Activated CD4-positive, alpha-beta T cell treated with anti-CD3 and anti-CD28 coated beads, Interleukin-2, amount 10 ng/mL, durations not matched to agents 7 days and 5 days (primary cell): ENCODE measurements at regions of chr3 and their contacts with region 1.

Region 1: GRCh38 chr3:50298836-50299637 is at the starts of genes HYAL3 and NAA80:
- DNase-seq: peak; percentile 99
- H3K4me3 Mint-ChIP-seq: peak within 1 kb of the TSS; percentile 95
- H3K27ac Mint-ChIP-seq: peak within 1 kb of the TSS; percentile 100
- H3K4me1 Mint-ChIP-seq: peaks cover 30% of the 10 kb centered on the region
- H3K27me3 Mint-ChIP-seq: no peaks in the 10 kb centered on the region
- total RNA-seq, gene HYAL3: 9.2 to 10.9 TPM
- total RNA-seq, gene NAA80: 28.9 to 31.7 TPM

Region 2: GRCh38 chr3:50121416-50122032 is 177.5 kb before region 1 on chr3:
- CTCF ChIA-PET with region 1: no interaction called
- POLR2A ChIA-PET with region 1: no interaction called
- DNase-seq: peak; percentile 73
- H3K4me3 Mint-ChIP-seq: no peak overlapping the region
- H3K27ac Mint-ChIP-seq: no peak overlapping the region
- H3K4me1 Mint-ChIP-seq: no peaks in the 10 kb centered on the region
- H3K27me3 Mint-ChIP-seq: no peaks in the 10 kb centered on the region

Region 3: DNA sequence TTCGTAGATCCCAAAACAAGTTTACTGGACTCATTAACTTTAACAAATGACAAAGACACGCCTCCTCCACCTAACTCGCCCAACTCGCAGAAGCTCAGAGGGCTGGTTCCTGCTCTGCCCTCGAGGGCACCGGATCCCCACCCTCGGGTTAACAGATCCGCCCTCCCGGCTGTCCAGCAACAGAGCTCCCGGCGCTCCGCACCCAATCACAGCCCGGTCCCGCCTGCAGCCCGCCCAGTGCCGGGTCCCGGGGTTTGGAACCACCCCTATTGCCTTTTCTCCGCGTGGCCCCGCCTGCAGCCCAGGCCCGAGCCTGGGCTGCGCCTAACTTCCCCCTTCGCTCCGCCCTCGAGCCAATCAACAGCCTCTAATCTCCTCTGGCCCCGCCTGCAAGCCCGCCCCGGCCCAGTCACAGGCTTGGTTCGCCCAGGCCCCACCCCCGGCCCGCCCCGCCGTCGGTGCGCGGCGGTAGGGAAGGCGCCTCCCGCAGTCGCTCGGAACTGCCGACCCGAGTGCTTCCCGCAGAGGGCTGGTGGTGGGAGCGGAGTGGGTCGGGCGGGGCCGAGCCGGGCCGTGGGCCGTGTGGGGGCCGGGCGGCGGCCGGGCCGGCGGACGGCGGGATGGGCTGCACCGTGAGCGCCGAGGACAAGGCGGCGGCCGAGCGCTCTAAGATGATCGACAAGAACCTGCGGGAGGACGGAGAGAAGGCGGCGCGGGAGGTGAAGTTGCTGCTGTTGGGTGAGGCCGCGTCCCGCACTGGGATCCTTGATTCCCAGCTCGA is 63.1 kb before region 1 on chr3 and contains the start of gene GNAI2:
- CTCF ChIA-PET with region 1: interaction called, 10 read pairs
- POLR2A ChIA-PET with region 1: interaction called, 3 read pairs
- DNase-seq: peak; percentile 99
- H3K4me3 Mint-ChIP-seq: peak within 1 kb of the TSS; percentile 93
- H3K27ac Mint-ChIP-seq: peak within 1 kb of the TSS; percentile 97
- H3K4me1 Mint-ChIP-seq: peaks cover 42% of the 10 kb centered on the region
- H3K27me3 Mint-ChIP-seq: no peaks in the 10 kb centered on the region
- total RNA-seq, gene GNAI2: 489 to 524 TPM

Region 4: DNA sequence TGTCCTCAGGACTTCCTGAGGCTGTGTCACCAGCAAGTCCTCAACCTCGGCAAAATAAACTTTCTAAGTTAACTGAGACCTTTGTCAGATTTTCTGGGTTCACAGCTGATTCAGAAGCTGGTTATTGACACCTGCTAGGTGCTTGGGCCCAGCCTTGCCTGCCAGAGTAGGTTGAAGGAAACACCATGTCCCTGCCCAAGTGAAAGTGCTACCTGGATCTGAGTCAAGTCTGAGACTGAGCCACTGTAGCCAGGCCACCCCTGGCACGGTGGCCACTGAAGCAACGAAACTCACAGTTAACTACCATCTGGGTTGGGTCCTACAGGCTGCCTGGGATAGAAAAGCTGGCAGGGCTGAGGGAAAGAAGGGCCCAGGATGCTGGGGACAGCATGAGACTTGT is 15.3 kb after region 1 on chr3:
- CTCF ChIA-PET with region 1: interaction called, 12 read pairs
- POLR2A ChIA-PET with region 1: no interaction called
- DNase-seq: no peak
- H3K4me3 Mint-ChIP-seq: no peak overlapping the region
- H3K27ac Mint-ChIP-seq: no peak overlapping the region
- H3K4me1 Mint-ChIP-seq: peaks cover 28% of the 10 kb centered on the region
- H3K27me3 Mint-ChIP-seq: no peaks in the 10 kb centered on the region

Region 5: DNA sequence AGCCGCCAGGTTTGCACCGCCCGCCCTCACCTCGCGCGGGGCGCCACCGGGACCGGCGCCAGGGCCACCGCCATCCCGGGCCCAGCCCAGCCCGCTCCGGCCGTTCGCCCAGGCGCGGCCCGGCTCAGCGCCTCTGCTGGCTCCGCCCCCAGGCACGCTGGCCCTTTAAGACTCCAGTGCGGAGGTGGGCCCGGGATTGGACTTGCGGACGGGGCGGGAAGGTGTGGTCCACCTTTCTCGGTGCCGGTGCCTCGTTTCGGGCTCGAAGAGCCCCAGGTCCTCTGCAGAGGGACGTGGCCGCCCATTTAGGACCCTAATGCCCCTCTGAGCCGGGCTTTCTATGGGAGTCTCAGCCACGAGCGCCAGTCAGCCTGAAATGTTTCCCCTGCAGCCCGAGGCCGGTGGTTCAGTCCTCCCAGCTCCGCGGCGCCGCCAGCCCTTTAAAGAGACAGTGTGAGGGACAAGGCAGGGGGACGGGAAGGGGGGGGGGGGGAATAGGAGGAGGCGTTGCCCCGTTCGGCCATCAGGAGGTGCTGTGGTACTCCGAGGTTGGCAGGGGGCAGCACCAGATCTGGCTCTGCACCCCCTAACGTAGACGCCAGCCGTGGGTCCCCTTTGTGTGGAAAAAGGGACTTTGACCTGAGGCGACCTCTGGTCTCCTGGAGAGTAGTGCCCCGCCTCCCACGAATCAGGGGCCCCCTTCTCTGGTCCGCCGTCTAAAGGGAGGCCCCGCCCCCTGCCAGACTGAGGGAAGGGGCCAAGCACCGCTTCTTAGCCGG is 22.5 kb after region 1 on chr3:
- CTCF ChIA-PET with region 1: interaction called, 19 read pairs
- POLR2A ChIA-PET with region 1: no interaction called
- DNase-seq: peak; percentile 86
- H3K4me3 Mint-ChIP-seq: peak overlapping the region; percentile 75
- H3K27ac Mint-ChIP-seq: peak overlapping the region; percentile 97
- H3K4me1 Mint-ChIP-seq: peaks cover 40% of the 10 kb centered on the region
- H3K27me3 Mint-ChIP-seq: no peaks in the 10 kb centered on the region

Region 6: GRCh38 chr3:50337191-50337841 is 38.3 kb after region 1 on chr3:
- CTCF ChIA-PET with region 1: interaction called, 21 read pairs
- POLR2A ChIA-PET with region 1: interaction called, 3 read pairs
- DNase-seq: peak; percentile 97
- H3K4me3 Mint-ChIP-seq: peak overlapping the region; percentile 87
- H3K27ac Mint-ChIP-seq: peak overlapping the region; percentile 95
- H3K4me1 Mint-ChIP-seq: peaks cover 67% of the 10 kb centered on the region
- H3K27me3 Mint-ChIP-seq: no peaks in the 10 kb centered on the region